Cardiac septum (tissue), 1 donor: ENCODE measurements at regions of chr4 and their contacts with region 1.

Region 1: GRCh38 chr4:88591787-88592599 is at the start of gene HERC3:
- DNase-seq: peak; percentile 97
- total RNA-seq, gene HERC3: 46.3 TPM

Region 2: GRCh38 chr4:88378691-88379559 is 213.1 kb before region 1 on chr4 and contains the start of gene HERC6:
- intact Hi-C with region 1: loop called (anchors 10 kb)
- DNase-seq: peak; percentile 85
- total RNA-seq, gene HERC6: 10.0 TPM

Region 3: DNA sequence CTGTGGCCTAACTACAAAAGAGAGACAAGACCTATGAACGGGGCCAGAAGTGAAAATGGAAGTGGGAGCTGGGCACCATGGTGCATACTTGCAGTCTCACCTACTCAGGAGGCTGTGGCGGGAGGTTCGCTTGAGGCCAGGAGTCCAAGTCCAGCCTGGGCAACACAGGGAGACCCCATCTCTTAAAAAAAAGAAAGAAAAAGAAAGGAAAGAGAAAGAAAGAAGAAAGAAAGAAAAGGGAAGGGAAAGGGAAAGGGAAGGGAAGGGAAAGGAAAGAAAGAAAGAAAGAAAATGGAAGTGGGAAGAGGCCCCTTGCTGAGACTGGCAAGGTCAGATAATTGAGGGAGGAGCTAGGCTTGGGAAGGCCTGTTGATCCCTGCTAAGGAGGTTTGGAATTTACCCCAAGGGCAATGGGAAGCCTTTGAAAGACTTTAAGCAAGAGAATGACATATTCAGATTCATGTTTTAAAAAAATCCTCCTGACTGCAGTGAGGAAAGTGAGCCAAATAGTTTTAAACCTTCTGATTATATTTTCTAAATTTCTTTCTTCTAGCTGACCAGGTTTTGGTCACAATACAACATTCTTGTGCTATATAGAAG is 152.7 kb before region 1 on chr4:
- intact Hi-C with region 1: no loop called
- DNase-seq: no peak

Region 4: DNA sequence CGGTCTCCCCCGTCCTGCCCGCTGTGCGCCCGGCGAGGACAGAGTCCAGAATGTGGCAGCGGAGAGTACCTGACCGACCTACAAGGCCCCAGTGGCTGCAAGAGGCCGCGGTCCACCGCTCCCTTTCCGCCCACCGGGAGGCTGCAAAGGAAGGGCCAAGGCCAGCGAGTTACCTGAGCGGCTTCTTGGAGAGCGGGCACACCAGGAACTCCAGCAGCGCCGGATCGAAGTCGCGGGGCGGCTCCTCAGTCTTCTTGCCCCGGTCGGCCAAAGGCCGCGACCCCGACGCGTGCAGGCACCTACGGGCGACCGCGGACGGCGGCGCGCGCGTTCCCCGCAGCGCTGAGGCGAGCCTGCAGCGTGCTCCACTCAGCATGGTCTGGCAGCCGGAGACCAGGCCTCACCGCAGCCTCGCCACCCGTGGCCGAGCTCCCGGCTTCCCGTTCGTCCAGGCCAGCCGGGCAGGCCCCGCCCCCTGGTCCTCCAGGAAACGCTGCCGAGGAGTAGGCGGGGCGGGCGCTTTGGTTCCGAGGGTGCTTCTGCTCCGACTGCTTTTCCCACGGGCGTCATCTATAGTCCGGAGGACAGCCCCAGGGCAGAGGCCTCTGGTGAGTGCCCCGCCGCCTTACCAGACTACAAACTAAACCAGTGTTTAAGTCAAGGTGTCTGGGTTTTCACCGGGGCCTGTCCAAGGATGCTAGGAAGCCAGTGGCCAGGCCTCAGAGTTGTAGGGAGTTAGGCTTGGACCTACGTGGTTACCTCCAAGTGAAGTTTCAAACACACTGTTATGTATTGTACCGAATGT is 68.5 kb before region 1 on chr4 and contains the start of gene PYURF:
- intact Hi-C with region 1: loop called (anchors 2 kb)
- DNase-seq: peak; percentile 96
- total RNA-seq, gene PYURF: 50.8 TPM

Region 5: DNA sequence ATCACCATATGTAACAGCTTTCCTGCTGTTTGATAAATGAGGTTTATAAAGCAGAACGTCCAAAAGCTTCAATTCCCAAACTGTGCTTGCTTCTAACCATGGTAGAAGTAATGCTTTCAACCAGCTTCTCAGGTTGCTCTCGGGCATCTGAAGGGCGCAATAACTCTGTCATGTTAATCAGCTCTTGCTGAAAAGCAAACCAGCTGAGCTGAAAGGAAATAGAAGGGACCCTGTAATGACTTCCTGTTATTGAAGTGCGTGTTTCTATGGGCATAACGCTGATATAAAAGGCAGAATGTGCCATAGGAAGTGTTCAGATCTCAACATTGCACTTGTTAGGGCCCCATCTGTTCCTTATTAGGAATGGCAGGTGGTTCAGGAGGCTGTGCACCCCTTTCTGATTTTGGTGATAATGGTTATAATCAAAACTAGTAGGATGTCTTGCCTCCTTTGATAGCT is 21.5 kb after region 1 on chr4:
- intact Hi-C with region 1: loop called (anchors 2 kb)
- DNase-seq: no peak

Region 6: DNA sequence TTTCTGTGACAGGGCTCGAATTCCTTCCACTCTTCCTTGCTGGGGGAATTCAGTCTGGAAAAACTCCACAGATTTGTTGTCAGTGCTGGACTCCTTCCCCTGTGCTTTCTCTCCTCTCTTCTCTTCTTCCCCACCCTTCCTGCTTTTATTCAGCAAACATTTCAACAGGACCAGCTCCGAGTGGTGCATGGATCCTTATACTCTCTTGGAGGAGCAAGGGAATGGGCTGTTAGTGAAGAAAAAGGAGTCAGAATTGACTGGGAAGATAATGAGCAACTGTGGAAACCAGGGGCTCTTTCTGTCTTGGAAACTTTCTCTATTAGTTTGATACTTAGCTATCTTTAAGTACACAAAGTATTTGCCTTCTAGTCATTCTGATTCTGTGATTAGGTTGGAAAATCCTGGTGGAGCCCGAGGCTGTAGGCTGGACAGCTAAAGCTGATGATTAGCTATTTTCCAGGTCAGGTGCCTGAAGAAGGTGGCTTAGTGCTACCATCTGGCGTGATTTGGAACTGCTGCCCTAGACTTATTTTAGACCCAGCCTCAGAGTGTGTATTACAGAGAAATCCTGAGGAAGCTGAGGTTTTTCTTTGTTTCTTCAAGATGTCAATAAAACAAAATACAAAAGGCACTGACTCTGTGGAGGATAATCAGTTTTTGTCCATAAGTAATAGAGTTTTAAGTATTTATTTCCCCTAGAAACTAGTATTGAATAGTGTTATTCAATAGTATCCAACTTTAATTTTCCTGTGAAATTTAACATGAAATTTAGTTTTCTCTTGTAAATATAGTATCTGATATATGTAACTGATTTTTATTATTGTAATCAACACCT is 67.3 kb after region 1 on chr4:
- intact Hi-C with region 1: loop called (anchors 10 kb)
- DNase-seq: no peak